Activated CD4-positive, alpha-beta T cell treated with anti-CD3 and anti-CD28 coated beads, Interleukin-2, amount 10 ng/mL, durations not matched to agents 7 days and 5 days (primary cell): ENCODE measurements at regions of chr1 and their contacts with region 1.

Region 1: DNA sequence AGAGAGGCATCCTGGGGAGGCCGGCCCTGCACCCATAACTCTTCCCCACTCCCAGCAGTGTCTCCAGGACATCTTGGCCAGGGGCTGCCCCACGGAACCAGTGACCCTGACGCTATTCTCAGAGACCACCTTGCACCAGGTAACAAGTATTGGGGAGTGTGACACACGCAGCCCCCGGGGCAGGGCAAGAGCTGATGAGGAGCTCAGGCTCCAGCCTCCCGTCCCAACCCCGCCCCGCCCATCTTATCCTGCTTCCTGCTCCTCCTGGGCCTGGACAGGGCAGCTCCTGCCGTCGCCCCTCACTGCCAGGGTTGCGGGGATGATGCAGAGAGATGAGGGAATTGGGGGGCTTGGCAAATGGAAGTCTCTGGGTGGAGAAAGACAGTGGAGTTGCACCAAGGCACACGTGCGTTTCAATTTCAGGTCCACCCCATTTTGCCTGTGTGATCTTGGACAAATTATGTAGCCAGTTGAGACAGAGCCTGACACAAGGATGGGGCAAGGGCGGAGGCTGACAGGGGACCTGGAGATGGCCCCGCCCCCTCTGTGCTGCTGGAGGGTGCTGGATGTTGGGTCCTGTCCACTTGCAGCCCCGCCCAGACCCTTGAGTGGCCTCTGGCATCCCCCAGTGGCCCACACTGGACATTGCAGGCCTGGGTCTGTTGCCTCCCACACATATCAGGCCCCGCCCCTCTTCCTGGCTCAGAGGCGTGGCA is 10.7 kb downstream of the CLCNKA start:
- DNase-seq: peak; percentile 48
- H3K4me3 Mint-ChIP-seq: no peak overlapping the region
- H3K27ac Mint-ChIP-seq: no peak overlapping the region
- H3K4me1 Mint-ChIP-seq: peaks cover 2% of the 10 kb centered on the region
- H3K27me3 Mint-ChIP-seq: peaks cover 7% of the 10 kb centered on the region

Region 2: DNA sequence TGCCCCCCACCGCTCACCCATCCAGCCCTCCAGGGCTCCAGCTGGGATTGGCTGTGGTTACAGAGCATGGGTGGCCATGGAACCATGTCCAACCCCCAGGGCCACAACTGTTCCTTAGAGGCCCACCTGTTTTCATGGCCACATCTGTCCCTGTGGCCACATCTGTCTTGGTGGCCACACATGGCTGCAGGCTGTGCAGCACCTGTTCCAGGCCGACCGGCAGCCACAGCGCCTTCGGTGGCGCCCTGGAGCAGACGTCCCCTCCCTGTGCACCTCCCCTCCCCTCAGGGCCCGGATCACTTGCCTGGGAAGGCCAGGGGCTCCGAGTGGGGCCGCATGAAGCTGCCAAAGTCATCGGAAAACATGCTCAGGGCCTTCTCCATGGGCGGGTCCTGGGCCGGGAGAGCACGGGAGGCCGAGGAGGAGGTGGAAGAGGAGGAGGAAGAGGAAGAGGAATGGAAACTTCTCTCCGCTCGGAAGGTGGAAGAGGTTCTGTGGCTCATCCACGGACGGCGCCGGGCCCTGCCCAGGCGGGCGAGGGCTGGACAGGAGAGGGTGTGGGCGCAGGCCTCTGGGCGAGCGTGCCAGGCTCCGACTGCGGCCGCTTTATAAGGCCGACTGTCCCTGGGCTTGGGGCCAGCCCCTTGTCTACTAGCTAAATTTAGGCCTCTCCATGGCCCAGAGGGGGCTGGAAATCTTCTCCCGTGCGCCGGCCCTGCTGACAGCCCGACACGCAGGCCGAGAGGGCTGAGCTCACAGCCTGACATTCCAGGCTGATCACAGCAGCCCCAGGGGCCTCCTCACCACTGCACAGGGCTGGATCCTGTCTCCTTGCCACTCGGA is 14.9 kb before region 1 on chr1 and contains the start of gene HSPB7:
- CTCF ChIA-PET with region 1: interaction called, 10 read pairs
- POLR2A ChIA-PET with region 1: no interaction called
- DNase-seq: no peak
- H3K4me3 Mint-ChIP-seq: no peak within 1 kb of the TSS
- H3K27ac Mint-ChIP-seq: no peak within 1 kb of the TSS
- H3K4me1 Mint-ChIP-seq: peaks cover under 1% of the 10 kb centered on the region
- H3K27me3 Mint-ChIP-seq: no peaks in the 10 kb centered on the region
- total RNA-seq, gene HSPB7: not detected

Region 3: GRCh38 chr1:16055613-16056520 is 23.3 kb after region 1 on chr1:
- CTCF ChIA-PET with region 1: no interaction called
- POLR2A ChIA-PET with region 1: no interaction called
- DNase-seq: peak; percentile 89
- H3K4me3 Mint-ChIP-seq: no peak overlapping the region
- H3K27ac Mint-ChIP-seq: no peak overlapping the region
- H3K4me1 Mint-ChIP-seq: peaks cover 6% of the 10 kb centered on the region
- H3K27me3 Mint-ChIP-seq: peaks cover 3% of the 10 kb centered on the region